SK-N-SH (cell line): ENCODE measurements at regions of chr2 and their contacts with region 1.

Region 1: GRCh38 chr2:65040400-65041261 is 15.6 kb upstream of the CEP68 start:
- DNase-seq: peak; percentile 79
- H3K4me3 ChIP-seq: no peak overlapping the region
- H3K27ac ChIP-seq: no peak overlapping the region
- H3K4me1 ChIP-seq: no peaks in the 10 kb centered on the region
- H3K27me3 ChIP-seq: no peaks in the 10 kb centered on the region
- CTCF ChIP-seq: peak; percentile 88
- EP300 ChIP-seq: no peak
- RAD21 ChIP-seq: peak; percentile 94

Region 2: GRCh38 chr2:64922482-64923384 is 117.9 kb before region 1 on chr2:
- CTCF ChIA-PET with region 1: interaction called, 130 read pairs
- POLR2A ChIA-PET with region 1: no interaction called
- DNase-seq: no peak
- H3K4me3 ChIP-seq: no peak overlapping the region
- H3K27ac ChIP-seq: no peak overlapping the region
- H3K4me1 ChIP-seq: no peaks in the 10 kb centered on the region
- H3K27me3 ChIP-seq: no peaks in the 10 kb centered on the region; the same call in 1 of the 2 replicates
- CTCF ChIP-seq: no peak
- EP300 ChIP-seq: no peak
- RAD21 ChIP-seq: no peak

Region 3: GRCh38 chr2:65638443-65638842 is 597.8 kb after region 1 on chr2:
- CTCF ChIA-PET with region 1: no interaction called
- POLR2A ChIA-PET with region 1: no interaction called
- DNase-seq: peak; percentile 24
- H3K4me3 ChIP-seq: no peak overlapping the region
- H3K27ac ChIP-seq: no peak overlapping the region
- H3K4me1 ChIP-seq: peaks cover 0 to 5% of the 10 kb centered on the region in 2 experiments; a peak in 2 of 4 replicates
- H3K27me3 ChIP-seq: no peaks in the 10 kb centered on the region; the same call in 1 of the 2 replicates
- CTCF ChIP-seq: peak; percentile 37
- EP300 ChIP-seq: no peak
- RAD21 ChIP-seq: 0 out of 2 replicates have a peak, but pooled peaks have one; percentile 6